A549 (cell line): ENCODE measurements at regions of chrX and their contacts with region 1.

Region 1: DNA sequence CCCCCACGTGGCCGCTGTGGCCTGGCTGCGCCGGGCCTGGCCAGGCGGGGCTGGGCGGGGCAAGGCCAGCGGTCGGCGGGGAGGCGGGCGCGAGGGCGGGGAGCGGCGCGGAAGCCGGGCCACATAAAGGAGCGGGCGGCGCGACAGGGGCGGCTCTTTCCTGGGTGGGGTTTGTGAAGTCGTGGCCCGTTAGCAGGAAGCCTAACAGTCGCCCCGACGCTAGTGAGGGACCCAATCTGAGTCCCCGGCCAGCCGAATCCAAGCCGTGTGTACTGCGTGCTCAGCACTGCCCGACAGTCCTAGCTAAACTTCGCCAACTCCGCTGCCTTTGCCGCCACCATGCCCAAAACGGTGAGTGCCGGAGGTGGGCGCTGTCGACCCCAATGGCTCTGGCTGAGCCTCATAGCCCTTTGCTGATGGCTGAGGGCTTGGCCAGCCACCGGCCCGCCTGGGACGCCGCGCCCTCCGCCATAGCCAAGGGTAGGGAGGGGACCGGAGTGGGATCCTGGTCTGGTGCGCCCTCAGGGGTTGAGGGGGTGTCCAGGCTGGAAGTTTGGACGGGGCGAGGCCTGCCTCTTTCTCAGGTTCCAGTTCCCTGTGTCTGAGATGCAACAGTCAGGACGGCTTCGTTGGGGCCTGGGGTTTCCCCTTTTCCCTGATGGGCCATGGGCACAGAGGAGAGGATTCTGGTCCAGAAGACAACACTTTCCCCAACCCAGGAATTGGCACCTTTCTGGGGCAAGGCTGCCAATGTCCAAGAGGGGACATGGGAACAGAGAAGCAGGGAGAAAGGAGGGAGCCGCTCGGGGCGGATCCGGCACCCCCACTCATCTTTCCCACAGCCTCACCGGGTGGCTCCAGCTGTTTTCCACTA is at the start of gene MSN:
- DNase-seq: peak; percentile 36 to 76
- ATAC-seq: peak; percentile 88 to 92
- H3K4me3 ChIP-seq: peak within 1 kb of the TSS; percentile 73
- H3K27ac ChIP-seq: peak within 1 kb of the TSS; percentile 89 to 99
- H3K4me1 ChIP-seq: peaks cover 38% of the 10 kb centered on the region
- CTCF ChIP-seq: no peak
- EP300 ChIP-seq: no peak
- POLR2A ChIP-seq: peak; percentile 79
- RAD21 ChIP-seq: no peak; a peak in 2 of 5 replicates
- polyA plus RNA-seq, gene MSN: 269 and 286 TPM in 2 replicates

Region 2: DNA sequence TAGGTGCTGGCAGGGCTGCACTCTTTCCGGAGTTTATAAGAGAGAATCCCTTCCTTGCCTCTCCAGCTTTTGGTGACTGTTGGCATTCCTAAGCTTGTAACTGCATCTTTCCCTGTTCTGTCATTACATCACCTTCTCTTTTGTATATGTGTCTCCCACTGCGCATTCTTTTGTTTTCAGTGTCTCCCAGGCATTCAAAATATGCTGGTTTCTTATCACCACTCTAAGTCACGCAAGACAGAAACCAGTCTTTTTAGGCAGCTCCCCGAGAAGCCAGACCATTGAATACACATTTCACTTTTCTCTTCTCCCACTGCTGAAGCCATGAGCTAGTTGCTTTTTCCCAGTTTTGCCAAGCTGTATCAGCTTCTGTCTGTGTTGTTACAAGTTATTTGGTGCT is 204.2 kb before region 1 on chrX:
- CTCF ChIA-PET with region 1: no interaction called
- POLR2A ChIA-PET with region 1: no interaction called
- DNase-seq: no peak
- ATAC-seq: no peak
- H3K4me3 ChIP-seq: no peak overlapping the region
- H3K27ac ChIP-seq: no peak overlapping the region
- H3K4me1 ChIP-seq: no peaks in the 10 kb centered on the region
- CTCF ChIP-seq: no peak
- EP300 ChIP-seq: no peak
- POLR2A ChIP-seq: no peak
- RAD21 ChIP-seq: no peak

Region 3: DNA sequence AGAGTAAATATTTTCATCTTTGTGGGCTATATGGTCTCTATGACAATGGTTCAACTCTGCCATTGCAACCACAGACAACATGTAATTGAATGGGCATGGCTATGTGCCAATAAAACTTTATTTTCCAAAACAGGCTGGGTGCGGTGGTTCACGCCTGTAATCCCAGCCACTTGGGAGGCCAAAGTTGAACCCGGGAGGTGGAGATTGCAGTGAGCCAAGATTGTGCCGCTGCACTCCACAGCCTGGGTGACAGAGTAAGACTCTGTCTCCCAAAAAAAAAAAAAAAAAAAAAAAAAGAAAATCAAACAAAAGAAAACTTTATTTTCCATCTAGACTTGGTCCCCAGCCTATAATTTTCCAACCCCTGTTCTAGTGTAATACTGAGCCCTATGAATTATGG is 94.8 kb before region 1 on chrX:
- CTCF ChIA-PET with region 1: no interaction called
- POLR2A ChIA-PET with region 1: no interaction called
- DNase-seq: no peak
- ATAC-seq: no peak
- H3K4me3 ChIP-seq: no peak overlapping the region
- H3K27ac ChIP-seq: no peak overlapping the region
- H3K4me1 ChIP-seq: no peaks in the 10 kb centered on the region
- CTCF ChIP-seq: no peak
- EP300 ChIP-seq: no peak
- POLR2A ChIP-seq: no peak
- RAD21 ChIP-seq: no peak

Region 4: DNA sequence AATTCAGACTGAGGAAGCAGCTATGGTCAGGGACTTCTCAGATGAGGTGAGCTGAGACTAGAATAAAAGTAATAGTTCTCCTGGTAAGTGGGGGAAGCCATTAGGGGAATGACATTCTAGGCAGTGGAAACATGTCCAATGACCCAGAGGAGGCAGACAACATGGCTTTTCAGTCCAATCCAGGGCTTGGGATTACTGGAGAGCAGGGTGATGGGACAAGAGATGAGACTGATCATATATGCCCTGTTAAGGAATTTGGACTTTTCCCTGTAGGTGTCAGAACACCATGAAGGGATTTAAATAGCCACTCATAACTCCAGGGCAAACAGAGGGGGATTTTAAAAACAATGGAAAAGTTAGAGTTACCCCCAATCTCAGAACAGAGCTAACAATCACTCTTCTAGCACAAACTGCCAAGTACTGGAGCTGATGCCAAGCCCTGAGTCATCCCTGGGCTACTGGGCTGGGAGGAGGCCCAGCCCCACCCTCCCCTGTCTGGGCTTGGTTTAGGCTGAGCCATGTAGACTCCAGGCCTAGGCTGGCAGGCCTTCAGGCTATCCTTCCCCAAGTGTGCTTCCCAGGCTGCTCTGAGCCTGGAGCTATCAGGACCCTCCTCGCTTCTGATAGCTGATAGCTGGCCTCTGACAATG is 23.0 kb before region 1 on chrX:
- CTCF ChIA-PET with region 1: no interaction called
- POLR2A ChIA-PET with region 1: interaction called, 31 read pairs
- DNase-seq: peak; percentile 67 to 80
- ATAC-seq: peak; percentile 95 to 98
- H3K4me3 ChIP-seq: no peak overlapping the region
- H3K27ac ChIP-seq: peak overlapping the region; percentile 87 to 95
- H3K4me1 ChIP-seq: peaks cover 39% of the 10 kb centered on the region
- CTCF ChIP-seq: no peak
- EP300 ChIP-seq: no peak
- POLR2A ChIP-seq: no peak
- RAD21 ChIP-seq: no peak

Region 5: GRCh38 chrX:65677954-65678469 is 10.3 kb after region 1 on chrX:
- CTCF ChIA-PET with region 1: interaction called, 4 read pairs
- POLR2A ChIA-PET with region 1: interaction called, 10 read pairs
- DNase-seq: peak; percentile 28 to 71
- ATAC-seq: peak; percentile 69 to 71
- H3K4me3 ChIP-seq: peak overlapping the region; percentile 27; the same call in 2 of the 3 replicates
- H3K27ac ChIP-seq: peak overlapping the region; percentile 86 to 87
- H3K4me1 ChIP-seq: peaks cover 90% of the 10 kb centered on the region
- CTCF ChIP-seq: no peak
- EP300 ChIP-seq: no peak
- POLR2A ChIP-seq: no peak
- RAD21 ChIP-seq: no peak